ENCODE measurements at regions of chr14 and their contacts with region 1.

Region 1: DNA sequence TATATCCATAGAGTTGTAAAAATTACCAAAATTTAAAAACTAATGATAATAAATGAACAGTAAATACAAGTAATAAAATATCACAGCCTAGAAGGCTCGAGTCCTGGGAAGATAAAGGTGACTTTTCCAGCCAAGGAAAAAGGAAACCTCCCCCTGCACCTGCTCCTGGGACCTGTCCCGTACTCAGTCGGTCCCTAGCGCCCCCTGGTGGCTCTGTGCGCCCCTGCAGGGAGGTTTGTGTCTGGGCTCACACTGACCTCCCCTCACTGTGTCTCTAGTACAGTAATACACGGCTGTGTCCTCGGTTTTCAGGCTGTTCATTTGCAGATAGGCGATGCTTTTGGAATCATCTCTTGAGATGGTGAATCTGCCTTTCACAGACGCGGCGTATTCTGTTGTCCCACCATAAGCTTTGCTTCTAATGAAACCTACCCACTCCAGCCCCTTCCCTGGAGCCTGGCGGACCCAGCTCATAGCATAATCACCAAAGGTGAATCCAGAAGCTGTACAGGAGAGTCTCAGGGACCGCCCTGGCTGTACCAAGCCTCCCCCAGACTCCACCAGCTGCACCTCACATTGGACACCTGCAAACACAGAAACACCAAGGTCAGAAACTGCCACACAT is 1030.4 kb downstream of the TMEM121 start:
- DNase-seq: peak; percentile 55
- H3K4me3 Mint-ChIP-seq: no peak overlapping the region
- H3K27ac Mint-ChIP-seq: no peak overlapping the region
- H3K4me1 Mint-ChIP-seq: no peaks in the 10 kb centered on the region
- H3K27me3 Mint-ChIP-seq: peaks cover 28% of the 10 kb centered on the region

Region 2: DNA sequence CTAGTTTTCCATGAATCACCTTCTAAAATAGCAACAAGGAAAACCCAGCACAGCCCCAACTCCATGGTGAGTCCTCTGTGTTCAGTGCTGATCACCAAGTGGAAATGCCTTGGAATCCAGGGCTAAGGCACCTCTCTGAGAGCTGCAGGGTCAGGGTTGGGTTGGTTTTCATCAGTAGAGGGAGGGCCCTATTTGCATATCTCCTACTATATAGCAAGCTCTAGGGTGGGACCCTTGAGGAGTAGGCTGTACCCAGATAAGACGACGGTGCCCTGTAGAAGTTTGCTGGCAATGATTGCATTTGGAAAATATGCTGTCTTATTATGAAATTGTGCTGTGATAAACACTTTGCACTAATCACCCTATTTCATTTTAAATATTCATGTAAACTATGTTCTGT is 18.6 kb before region 1 on chr14:
- intact Hi-C with region 1: loop called (anchors 1 kb)
- DNase-seq: no peak
- H3K4me3 Mint-ChIP-seq: no peak overlapping the region
- H3K27ac Mint-ChIP-seq: no peak overlapping the region
- H3K4me1 Mint-ChIP-seq: peaks cover 11% of the 10 kb centered on the region
- H3K27me3 Mint-ChIP-seq: peaks cover 55% of the 10 kb centered on the region

Measured in activated T-helper 2 cell treated with anti-CD3 and anti-CD28 coated beads, Interferon-gamma antibody, Interleukin-2, Interleukin-4, amounts not matched to agents 10 μg/mL and 5 μg/mL and 100 μg/mL, durations not matched to agents 14 hours and 24 hours and 36 hours (primary cell).